ENCODE measurements at regions of chr2 and their contacts with region 1.

Region 1: GRCh38 chr2:27703638-27704341 is 40.1 kb downstream of the SLC4A1AP start:
- DNase-seq: peak; percentile 40
- ATAC-seq: peak; percentile 97
- H3K4me3 ChIP-seq: no peak overlapping the region
- H3K27ac ChIP-seq: no peak overlapping the region
- H3K4me1 ChIP-seq: no peaks in the 10 kb centered on the region
- H3K27me3 ChIP-seq: no peaks in the 10 kb centered on the region
- CTCF ChIP-seq: peak; percentile 83 to 93 (median 87)
- EP300 ChIP-seq: no peak
- POLR2A ChIP-seq: no peak
- RAD21 ChIP-seq: peak; percentile 94

Region 2: GRCh38 chr2:27689424-27689823 is 14.4 kb before region 1 on chr2:
- CTCF ChIA-PET with region 1: interaction called, 23 read pairs
- POLR2A ChIA-PET with region 1: no interaction called
- RAD21 ChIA-PET with region 1: interaction called, 4 read pairs
- SMC1A ChIA-PET with region 1: interaction called, 6 read pairs
- in situ Hi-C with region 1: no loop called
- intact Hi-C with region 1: no loop called
- DNase-seq: no peak
- ATAC-seq: no peak
- H3K4me3 ChIP-seq: no peak overlapping the region
- H3K27ac ChIP-seq: no peak overlapping the region
- H3K4me1 ChIP-seq: no peaks in the 10 kb centered on the region
- H3K27me3 ChIP-seq: no peaks in the 10 kb centered on the region
- CTCF ChIP-seq: no peak
- EP300 ChIP-seq: no peak
- POLR2A ChIP-seq: no peak
- RAD21 ChIP-seq: no peak

Region 3: DNA sequence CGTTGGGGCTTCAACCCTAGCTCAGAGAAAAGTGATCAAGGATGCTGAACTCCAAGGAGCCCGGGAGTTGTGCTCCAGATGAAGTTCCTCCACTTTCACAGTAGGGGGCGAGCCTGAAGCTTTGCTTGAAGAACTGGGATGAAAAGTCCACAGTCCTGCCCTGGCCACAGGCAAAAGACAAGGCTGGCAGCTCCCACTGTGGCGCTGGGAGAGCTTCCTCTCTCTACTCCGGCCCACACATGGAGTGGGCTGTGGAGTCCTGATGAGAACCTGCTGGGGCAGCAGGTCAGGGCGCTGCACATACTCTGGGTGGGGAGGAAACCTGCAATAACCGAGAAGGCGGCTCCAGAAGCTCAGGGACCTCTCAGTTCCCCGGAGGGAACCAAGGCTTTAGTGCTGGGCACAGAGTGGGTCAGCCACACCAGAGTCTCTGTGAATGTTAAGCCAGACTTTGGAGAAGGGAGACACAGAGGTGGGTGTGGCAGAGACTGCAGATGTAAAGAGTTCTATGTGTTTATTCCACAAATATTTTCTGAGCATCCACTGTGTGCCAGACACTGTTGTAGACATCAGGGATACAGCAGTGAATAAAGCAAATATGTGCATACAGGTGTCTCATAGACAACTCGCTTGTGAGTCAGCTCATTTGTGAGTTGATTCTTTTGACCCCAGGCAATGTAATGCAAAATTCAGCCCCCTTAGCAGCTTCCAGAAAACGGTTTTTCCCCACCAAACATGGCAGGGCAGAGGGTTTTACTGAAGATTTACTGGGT is 19.8 kb after region 1 on chr2:
- CTCF ChIA-PET with region 1: interaction called, 23 read pairs
- POLR2A ChIA-PET with region 1: no interaction called
- RAD21 ChIA-PET with region 1: no interaction called
- SMC1A ChIA-PET with region 1: interaction called, 6 read pairs
- in situ Hi-C with region 1: no loop called
- intact Hi-C with region 1: no loop called
- DNase-seq: no peak
- ATAC-seq: peak; percentile 81
- H3K4me3 ChIP-seq: no peak overlapping the region
- H3K27ac ChIP-seq: no peak overlapping the region
- H3K4me1 ChIP-seq: no peaks in the 10 kb centered on the region
- H3K27me3 ChIP-seq: no peaks in the 10 kb centered on the region; a peak in 1 of 4 replicates
- CTCF ChIP-seq: peak; percentile 56 to 77 (median 70)
- EP300 ChIP-seq: no peak
- POLR2A ChIP-seq: no peak
- RAD21 ChIP-seq: peak; percentile 56

Region 4: GRCh38 chr2:28392297-28393113 is 688.7 kb after region 1 on chr2 and contains the start of gene FOSL2:
- CTCF ChIA-PET with region 1: no interaction called
- POLR2A ChIA-PET with region 1: interaction called, 5 read pairs
- RAD21 ChIA-PET with region 1: no interaction called
- SMC1A ChIA-PET with region 1: interaction called, 4 read pairs
- in situ Hi-C with region 1: no loop called
- intact Hi-C with region 1: loop called (anchors 2 kb)
- DNase-seq: peak; percentile 87
- ATAC-seq: peak; percentile 89
- H3K4me3 ChIP-seq: peak within 1 kb of the TSS; percentile 80
- H3K27ac ChIP-seq: peak within 1 kb of the TSS; percentile 52
- H3K4me1 ChIP-seq: 0 out of 2 replicates have a peak, but pooled peaks cover 4% of the 10 kb centered on the region
- H3K27me3 ChIP-seq: peaks cover 2% of the 10 kb centered on the region in 2 experiments; a peak in 1 of 4 replicates
- CTCF ChIP-seq: 0 out of 6 replicates have a peak, but pooled peaks of 1 of the 3 experiments have one; percentile 0
- EP300 ChIP-seq: peak in 1 of 2 experiments; percentile 58; a peak in 1 of 4 replicates
- POLR2A ChIP-seq: peak; percentile 93
- RAD21 ChIP-seq: no peak
- polyA plus RNA-seq, gene FOSL2: 0.05 TPM

Region 5: GRCh38 chr2:28419443-28420270 is 715.9 kb after region 1 on chr2:
- CTCF ChIA-PET with region 1: interaction called, 4 read pairs
- POLR2A ChIA-PET with region 1: no interaction called
- RAD21 ChIA-PET with region 1: interaction called, 4 read pairs
- SMC1A ChIA-PET with region 1: interaction called, 4 read pairs
- in situ Hi-C with region 1: no loop called
- intact Hi-C with region 1: loop called (anchors 1 kb)
- DNase-seq: no peak
- ATAC-seq: peak; percentile 55
- H3K4me3 ChIP-seq: no peak overlapping the region
- H3K27ac ChIP-seq: no peak overlapping the region
- H3K4me1 ChIP-seq: no peaks in the 10 kb centered on the region
- H3K27me3 ChIP-seq: no peaks in the 10 kb centered on the region; a peak in 2 of 4 replicates
- CTCF ChIP-seq: peak; percentile 5 to 40 (median 28); a peak in 3 of 6 replicates
- EP300 ChIP-seq: no peak
- POLR2A ChIP-seq: no peak
- RAD21 ChIP-seq: peak; percentile 53

Region 6: GRCh38 chr2:28452534-28453081 is 748.8 kb after region 1 on chr2:
- CTCF ChIA-PET with region 1: interaction called, 8 read pairs
- POLR2A ChIA-PET with region 1: no interaction called
- RAD21 ChIA-PET with region 1: interaction called, 15 read pairs
- SMC1A ChIA-PET with region 1: no interaction called
- in situ Hi-C with region 1: no loop called
- intact Hi-C with region 1: loop called (anchors 1 kb)
- DNase-seq: no peak
- ATAC-seq: peak; percentile 94
- H3K4me3 ChIP-seq: no peak overlapping the region
- H3K27ac ChIP-seq: no peak overlapping the region
- H3K4me1 ChIP-seq: 0 out of 2 replicates have a peak, but pooled peaks cover 3% of the 10 kb centered on the region
- H3K27me3 ChIP-seq: no peaks in the 10 kb centered on the region
- CTCF ChIP-seq: peak; percentile 90 to 93 (median 92)
- EP300 ChIP-seq: no peak
- POLR2A ChIP-seq: no peak
- RAD21 ChIP-seq: peak; percentile 92

Measured in GM12878 (cell line).